ENCODE measurements at regions of chr9 and their contacts with region 1.

Region 1: GRCh38 chr9:38160613-38161215 is 91.7 kb upstream of the SHB start:
- DNase-seq: peak in 4 of 5 donors; percentile 61 to 67 (median 63)
- ATAC-seq: peak in 3 of 4 donors; percentile 59 to 61 (median 60)
- H3K4me3 ChIP-seq: no peak overlapping the region
- H3K27ac ChIP-seq: no peak overlapping the region
- H3K4me1 ChIP-seq: no peaks in the 10 kb centered on the region
- H3K27me3 ChIP-seq: no peaks in the 10 kb centered on the region
- CTCF ChIP-seq: peak; percentile 66 to 87 (median 82)
- POLR2A ChIP-seq: no peak

Region 2: DNA sequence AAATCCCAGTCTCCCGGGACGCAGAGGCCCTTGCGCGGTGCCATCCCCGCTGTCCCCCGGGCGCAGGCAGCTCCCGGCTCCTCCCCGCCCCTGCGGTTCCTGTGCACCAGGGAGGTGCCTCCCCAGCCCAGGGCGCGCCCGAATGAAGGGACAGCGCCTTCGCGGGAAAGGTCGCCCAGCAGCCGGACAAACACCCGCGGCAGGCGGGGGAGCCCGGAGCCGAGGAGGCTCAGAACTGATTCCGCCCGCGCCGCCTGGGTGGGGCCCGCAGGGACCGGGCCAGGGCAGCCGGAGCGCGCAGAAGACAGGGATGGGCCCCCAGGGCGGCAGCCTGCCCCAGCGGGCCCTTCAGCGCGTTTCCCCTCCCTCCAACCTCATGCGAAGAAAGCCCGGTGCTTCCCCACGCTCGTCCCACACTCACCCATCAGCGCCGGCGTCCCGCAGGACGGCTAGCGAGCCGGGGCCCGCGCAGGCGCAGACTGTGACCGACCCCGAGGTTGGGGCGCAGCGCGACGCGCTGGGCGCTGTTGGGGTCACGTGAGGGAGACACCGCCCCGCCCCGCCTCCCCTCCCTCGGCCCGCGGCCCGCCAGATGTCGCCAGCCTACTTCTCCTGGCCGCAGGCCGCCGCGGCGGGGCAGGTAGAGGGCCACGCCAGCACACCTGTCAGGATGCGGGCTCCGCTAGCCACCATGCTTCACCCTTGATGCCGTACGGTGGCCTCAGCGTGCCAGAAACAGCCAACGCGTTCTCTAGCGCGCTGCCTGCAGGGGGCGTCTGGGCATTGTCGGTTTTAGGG is 256.9 kb before region 1 on chr9 and contains the start of gene SLC25A51:
- intact Hi-C with region 1: loop called in 1 of 10 experiments (anchors 2 kb)
- DNase-seq: peak; percentile 93 to 97 (median 95)
- ATAC-seq: peak; percentile 83 to 94 (median 94)
- H3K4me3 ChIP-seq: peak within 1 kb of the TSS; percentile 71 to 99 (median 93)
- H3K27ac ChIP-seq: peak within 1 kb of the TSS; percentile 43 to 96 (median 88)
- H3K4me1 ChIP-seq: peaks cover 0 to 29% (median 21%) of the 10 kb centered on the region in 12 donors
- H3K27me3 ChIP-seq: no peaks in the 10 kb centered on the region
- CTCF ChIP-seq: peak; percentile 83 to 97 (median 92)
- POLR2A ChIP-seq: peak in 1 of 2 donors; percentile 71
- total RNA-seq, gene SLC25A51: 18.9 to 27.6 (median 22.9) TPM

Region 3: DNA sequence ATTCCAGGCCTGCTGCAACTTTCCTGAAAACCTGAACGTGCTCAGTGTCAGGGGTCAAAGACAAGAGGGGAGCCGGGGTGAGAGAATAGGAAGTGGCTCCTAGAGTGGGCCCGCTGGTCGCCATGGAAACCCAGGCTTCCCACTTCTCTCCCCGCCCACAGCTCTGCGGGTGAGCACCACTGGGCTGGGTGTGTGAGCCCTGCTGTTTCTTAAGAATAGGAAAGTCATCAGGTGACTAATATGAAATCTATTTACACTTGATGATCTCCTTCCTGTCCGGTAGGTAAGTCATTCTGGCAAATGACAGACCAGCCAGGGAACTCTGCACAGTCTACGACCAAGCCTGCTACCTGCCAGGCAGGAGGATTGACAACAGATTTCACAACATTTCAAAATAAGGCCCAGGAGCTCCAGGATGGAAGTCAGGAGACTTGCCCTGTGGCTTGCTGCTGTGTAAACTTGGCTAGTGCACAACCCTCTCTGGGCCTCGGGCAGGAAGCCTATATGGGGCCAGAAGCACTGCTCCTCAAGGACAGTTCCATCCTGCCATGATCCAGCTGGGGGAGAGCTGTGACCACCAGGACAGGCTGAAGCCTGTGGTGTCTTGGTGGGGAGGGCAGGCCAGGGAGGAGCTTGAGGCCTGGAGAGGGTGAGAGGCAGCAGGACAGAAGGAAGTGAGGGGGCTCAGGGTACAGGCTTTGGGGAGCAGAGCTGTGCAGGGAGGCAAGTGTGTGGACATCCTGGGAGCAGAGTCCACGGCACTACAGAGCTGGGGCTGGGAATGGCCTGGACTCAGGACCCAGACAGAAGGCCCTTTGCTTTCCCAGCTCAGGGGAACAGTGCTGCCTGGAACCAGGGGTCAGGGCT is 152.3 kb before region 1 on chr9:
- intact Hi-C with region 1: loop called in 1 of 10 experiments (anchors 5 kb)
- DNase-seq: peak in 1 of 5 donors; percentile 72
- ATAC-seq: peak in 3 of 4 donors; percentile 33 to 54 (median 49)
- H3K4me3 ChIP-seq: no peak overlapping the region
- H3K27ac ChIP-seq: peak overlapping the region in 5 of 12 donors; percentile 1 to 72 (median 34)
- H3K4me1 ChIP-seq: peaks cover 0 to 57% (median 35%) of the 10 kb centered on the region in 12 donors
- H3K27me3 ChIP-seq: no peaks in the 10 kb centered on the region
- CTCF ChIP-seq: no peak
- POLR2A ChIP-seq: no peak

Region 4: DNA sequence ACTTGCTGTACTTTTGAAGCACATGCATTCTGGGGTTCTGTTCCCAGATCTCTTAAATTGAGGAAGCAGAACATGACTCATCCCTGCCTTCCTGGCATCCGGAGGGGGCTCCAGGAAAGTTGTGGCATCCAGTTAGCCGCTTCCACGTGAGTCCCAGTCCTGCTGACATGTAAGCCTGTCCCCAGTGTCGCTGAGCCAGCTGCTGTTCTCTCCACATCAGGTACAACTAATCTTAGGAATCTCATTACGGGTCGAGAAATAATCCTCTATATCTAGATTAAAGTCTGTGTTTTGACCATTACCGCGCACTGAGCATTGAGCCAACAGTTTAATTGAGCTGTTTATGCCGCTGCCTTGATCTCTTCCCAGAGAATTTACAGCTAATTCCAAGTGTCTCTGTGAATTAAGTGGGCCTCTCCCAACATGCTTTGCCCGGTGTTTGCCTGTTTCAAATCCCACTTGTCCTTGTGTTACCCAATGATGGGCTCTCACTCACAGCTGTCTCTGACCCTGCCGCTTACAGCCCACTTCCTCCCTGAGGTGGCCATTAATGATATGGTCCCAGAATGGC is 81.2 kb before region 1 on chr9:
- intact Hi-C with region 1: loop called in 2 of 10 experiments (anchors 2 to 10 kb)
- DNase-seq: peak in 2 of 5 donors; percentile 25 to 59
- ATAC-seq: peak in 3 of 4 donors; percentile 19 to 51 (median 38)
- H3K4me3 ChIP-seq: no peak overlapping the region
- H3K27ac ChIP-seq: peak overlapping the region in 1 of 12 donors; percentile 33
- H3K4me1 ChIP-seq: peaks cover 0 to 49% (median 11%) of the 10 kb centered on the region in 12 donors
- H3K27me3 ChIP-seq: no peaks in the 10 kb centered on the region
- CTCF ChIP-seq: no peak
- POLR2A ChIP-seq: no peak

Region 5: DNA sequence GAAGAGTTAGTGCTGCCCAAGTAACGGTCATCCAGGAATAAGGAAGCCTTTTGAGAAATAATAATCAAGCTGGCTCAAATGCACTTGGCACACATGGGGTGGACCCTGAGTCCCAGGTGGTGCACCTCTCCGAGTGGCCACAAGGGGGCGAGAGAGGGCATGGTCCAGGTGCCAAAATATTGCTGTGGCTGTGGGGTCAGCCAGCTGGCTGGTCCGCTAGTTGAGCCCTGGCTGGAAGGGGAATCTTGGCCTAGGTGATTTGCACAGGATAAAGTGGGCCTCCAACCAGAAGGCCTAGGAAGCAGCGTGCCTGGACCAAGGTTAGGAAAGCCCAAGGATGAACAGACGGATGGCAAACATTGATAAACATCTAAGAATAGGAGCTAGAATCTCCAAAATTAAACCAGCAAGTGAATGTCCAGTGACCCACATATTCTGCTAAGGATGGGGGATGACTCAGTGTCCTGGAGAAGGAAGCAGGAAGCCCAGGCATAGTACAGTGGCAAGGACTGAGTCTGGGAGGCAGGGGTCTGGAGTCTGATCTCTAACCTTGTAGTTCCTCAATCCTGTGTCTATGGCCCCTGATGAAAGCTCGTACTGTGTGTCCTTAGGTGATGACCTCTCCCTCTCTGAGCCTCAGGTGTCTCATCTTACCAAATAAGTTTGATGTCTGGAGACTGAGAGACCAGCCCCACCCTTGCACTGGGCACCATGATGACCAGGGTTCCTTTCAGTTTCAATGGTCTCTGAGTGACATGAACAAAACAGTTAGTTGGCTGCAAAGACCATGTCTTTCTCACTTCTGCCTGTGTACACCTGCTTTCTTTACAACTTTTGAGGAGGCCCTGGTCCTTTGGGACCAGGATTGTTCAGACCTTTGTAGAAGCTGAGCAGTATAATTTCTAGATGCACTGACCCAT is 72.4 kb before region 1 on chr9:
- intact Hi-C with region 1: loop called in 6 of 10 experiments (anchors 2 to 10 kb)
- DNase-seq: peak; percentile 75 to 87 (median 75)
- ATAC-seq: peak; percentile 71 to 85 (median 79)
- H3K4me3 ChIP-seq: no peak overlapping the region
- H3K27ac ChIP-seq: no peak overlapping the region
- H3K4me1 ChIP-seq: peaks cover 0 to 23% (median 6%) of the 10 kb centered on the region in 12 donors
- H3K27me3 ChIP-seq: no peaks in the 10 kb centered on the region
- CTCF ChIP-seq: peak; percentile 94 to 100 (median 97)
- POLR2A ChIP-seq: no peak

Region 6: DNA sequence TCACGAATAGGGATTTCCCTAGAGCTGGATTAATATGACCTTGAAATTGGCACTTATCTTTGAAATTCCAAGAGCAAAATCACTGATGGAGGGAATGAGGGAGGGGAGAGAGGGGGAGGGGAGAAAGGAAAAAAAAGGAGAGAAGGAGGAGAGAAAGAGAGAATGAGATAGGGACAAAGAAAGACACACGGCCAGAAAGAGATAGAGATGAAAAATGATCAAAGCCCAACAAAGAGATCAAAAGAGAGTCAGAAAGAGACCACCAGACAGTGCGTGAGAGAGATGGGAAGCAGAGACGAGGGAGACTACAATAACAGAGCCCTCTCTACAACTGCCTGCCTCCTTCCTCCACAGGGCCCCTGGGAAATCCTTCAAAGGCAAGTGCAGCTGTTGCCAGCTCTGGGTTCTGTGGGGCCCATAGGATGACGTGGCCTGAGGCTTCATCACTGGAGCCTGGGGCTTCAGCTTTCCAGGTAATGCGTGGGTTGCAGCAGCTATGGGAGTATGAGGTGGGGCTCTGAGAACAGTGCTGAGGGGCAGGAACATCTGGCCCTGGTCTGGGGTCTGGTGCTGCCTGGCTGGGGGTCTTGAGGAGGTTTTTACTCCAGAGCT is 33.3 kb before region 1 on chr9:
- intact Hi-C with region 1: loop called in 1 of 10 experiments (anchors 5 kb)
- DNase-seq: no peak
- ATAC-seq: no peak
- H3K4me3 ChIP-seq: no peak overlapping the region
- H3K27ac ChIP-seq: no peak overlapping the region
- H3K4me1 ChIP-seq: no peaks in the 10 kb centered on the region
- H3K27me3 ChIP-seq: peaks cover 0 to 3% (median 0%) of the 10 kb centered on the region in 9 donors
- CTCF ChIP-seq: no peak
- POLR2A ChIP-seq: no peak

Region 7: GRCh38 chr9:38183994-38184568 is 23.4 kb after region 1 on chr9:
- intact Hi-C with region 1: no loop called
- DNase-seq: no peak
- ATAC-seq: no peak
- H3K4me3 ChIP-seq: no peak overlapping the region
- H3K27ac ChIP-seq: no peak overlapping the region
- H3K4me1 ChIP-seq: no peaks in the 10 kb centered on the region
- H3K27me3 ChIP-seq: no peaks in the 10 kb centered on the region
- CTCF ChIP-seq: no peak
- POLR2A ChIP-seq: no peak

Region 8: GRCh38 chr9:38318759-38319495 is 158.2 kb after region 1 on chr9:
- intact Hi-C with region 1: loop called in 1 of 10 experiments (anchors 10 kb)
- DNase-seq: no peak
- ATAC-seq: peak in 2 of 4 donors; percentile 34 to 37
- H3K4me3 ChIP-seq: peak overlapping the region in 4 of 12 donors; percentile 3 to 28 (median 19)
- H3K27ac ChIP-seq: peak overlapping the region in 1 of 12 donors; percentile 22
- H3K4me1 ChIP-seq: peaks cover 0 to 9% (median 0%) of the 10 kb centered on the region in 12 donors
- H3K27me3 ChIP-seq: no peaks in the 10 kb centered on the region
- CTCF ChIP-seq: no peak
- POLR2A ChIP-seq: no peak